Activated CD4-positive, alpha-beta T cell treated with anti-CD3 and anti-CD28 coated beads, Interleukin-2, amount 10 ng/mL, durations not matched to agents 7 days and 5 days (primary cell): ENCODE measurements at regions of chr7 and their contacts with region 1.

Region 1: DNA sequence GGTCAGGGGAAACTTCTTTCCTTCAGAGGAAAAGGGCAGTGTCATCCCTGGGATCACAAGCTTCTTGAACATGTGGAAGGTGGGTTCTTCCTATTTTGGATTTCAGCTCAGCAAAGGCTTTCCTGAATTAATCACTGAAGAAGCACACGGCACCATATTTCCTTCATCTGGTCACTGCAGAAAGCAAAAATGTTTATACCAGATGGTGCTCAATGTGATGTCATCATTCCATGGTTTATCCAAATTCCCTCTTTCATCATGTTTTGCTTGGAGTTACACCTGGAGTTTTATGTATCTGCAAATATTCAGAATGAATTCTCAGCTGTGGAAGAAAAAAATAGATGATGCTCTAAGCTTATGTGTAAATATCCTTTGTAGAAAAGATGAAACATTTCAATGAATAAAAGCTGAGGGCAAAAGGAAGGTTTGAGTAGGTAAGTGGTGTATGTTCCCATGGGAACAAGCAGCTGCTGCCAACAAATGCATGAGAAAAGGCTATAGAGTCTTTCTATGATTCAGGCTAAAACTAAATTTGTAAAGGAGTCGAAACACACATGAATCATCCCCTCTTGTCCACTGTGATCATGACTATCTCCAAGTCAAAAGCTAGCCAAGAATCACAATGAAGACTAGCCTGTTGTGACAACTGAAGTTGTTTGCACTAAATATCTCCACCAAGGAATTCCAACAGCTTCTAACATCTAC is 26.9 kb upstream of the BPGM start:
- DNase-seq: no peak
- H3K4me3 Mint-ChIP-seq: no peak overlapping the region
- H3K27ac Mint-ChIP-seq: no peak overlapping the region
- H3K4me1 Mint-ChIP-seq: no peaks in the 10 kb centered on the region
- H3K27me3 Mint-ChIP-seq: peaks cover 43% of the 10 kb centered on the region

Region 2: GRCh38 chr7:134605973-134606923 is 13.5 kb before region 1 on chr7:
- CTCF ChIA-PET with region 1: interaction called, 11 read pairs
- POLR2A ChIA-PET with region 1: no interaction called
- DNase-seq: peak; percentile 68
- H3K4me3 Mint-ChIP-seq: no peak overlapping the region
- H3K27ac Mint-ChIP-seq: no peak overlapping the region
- H3K4me1 Mint-ChIP-seq: peaks cover 3% of the 10 kb centered on the region
- H3K27me3 Mint-ChIP-seq: peaks cover 40% of the 10 kb centered on the region